ENCODE measurements at regions of chr15 and their contacts with region 1.

Region 1: DNA sequence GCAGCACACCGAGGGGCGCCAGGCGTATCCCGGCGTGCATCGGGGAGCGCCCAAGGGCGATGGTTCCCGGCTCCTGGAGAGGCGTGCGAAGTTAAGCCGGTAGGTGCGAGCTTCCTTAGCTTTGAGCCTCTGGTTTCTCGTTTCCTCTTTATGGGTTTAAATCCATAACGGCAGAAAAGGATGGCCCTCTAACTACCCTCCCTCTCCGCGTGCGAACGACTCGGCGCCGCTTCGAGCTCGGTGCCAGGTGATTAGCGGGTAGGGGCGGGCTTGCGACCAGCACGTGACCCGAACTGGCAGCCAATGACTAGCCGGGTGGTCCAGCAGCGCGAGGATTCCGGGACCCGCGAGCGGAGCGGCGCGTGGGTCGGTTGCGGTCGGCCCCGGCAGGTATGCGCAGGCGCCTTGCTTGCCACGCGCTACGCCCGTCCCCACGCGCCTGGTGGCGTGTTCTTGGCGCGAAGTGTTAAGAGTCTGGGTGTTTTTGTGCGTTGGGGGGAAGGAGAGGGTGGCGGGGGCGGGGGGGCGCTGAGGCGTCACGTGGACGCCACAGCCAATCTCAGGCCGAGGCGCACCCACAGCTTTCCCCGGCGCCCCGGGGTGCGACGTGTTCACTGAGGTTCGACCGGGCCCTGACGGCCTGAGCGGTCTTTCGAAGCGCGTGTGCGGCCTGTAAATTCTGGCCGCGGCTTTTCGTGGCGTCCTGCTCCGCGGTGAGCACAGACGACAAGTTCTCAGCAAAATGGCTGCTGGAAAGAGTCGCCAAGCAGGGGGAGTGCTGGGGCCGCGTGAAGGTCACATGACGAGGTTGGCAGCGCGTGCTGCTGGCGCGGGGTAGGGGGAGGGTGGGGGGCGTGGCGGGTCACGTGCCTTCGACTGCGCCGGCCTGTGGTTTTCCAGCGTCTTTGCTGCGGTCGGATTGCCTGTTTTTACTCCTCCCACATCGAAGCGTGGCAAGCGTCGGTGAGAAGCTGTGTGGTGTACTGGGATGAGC is 38.7 kb upstream of the MGA start:
- DNase-seq: peak; percentile 78
- ATAC-seq: peak; percentile 95
- H3K4me3 ChIP-seq: peak overlapping the region; percentile 36 to 63 (median 59); a peak in 5 of 6 replicates
- H3K27ac ChIP-seq: peak overlapping the region; percentile 83
- H3K4me1 ChIP-seq: peaks cover 26% of the 10 kb centered on the region
- H3K27me3 ChIP-seq: no peaks in the 10 kb centered on the region
- CTCF ChIP-seq: no peak
- EP300 ChIP-seq: peak in 1 of 2 experiments; percentile 38; a peak in 1 of 4 replicates
- POLR2A ChIP-seq: peak; percentile 60 to 81
- RAD21 ChIP-seq: peak; percentile 10; the same call in 1 of the 2 replicates

Region 2: GRCh38 chr15:41304149-41304770 is 317.2 kb before region 1 on chr15:
- CTCF ChIA-PET with region 1: no interaction called
- POLR2A ChIA-PET with region 1: no interaction called
- in situ Hi-C with region 1: no loop called
- intact Hi-C with region 1: no loop called
- DNase-seq: no peak
- ATAC-seq: no peak
- H3K4me3 ChIP-seq: no peak overlapping the region
- H3K27ac ChIP-seq: no peak overlapping the region
- H3K4me1 ChIP-seq: no peaks in the 10 kb centered on the region
- H3K27me3 ChIP-seq: no peaks in the 10 kb centered on the region
- CTCF ChIP-seq: no peak
- EP300 ChIP-seq: no peak
- POLR2A ChIP-seq: no peak
- RAD21 ChIP-seq: no peak

Region 3: DNA sequence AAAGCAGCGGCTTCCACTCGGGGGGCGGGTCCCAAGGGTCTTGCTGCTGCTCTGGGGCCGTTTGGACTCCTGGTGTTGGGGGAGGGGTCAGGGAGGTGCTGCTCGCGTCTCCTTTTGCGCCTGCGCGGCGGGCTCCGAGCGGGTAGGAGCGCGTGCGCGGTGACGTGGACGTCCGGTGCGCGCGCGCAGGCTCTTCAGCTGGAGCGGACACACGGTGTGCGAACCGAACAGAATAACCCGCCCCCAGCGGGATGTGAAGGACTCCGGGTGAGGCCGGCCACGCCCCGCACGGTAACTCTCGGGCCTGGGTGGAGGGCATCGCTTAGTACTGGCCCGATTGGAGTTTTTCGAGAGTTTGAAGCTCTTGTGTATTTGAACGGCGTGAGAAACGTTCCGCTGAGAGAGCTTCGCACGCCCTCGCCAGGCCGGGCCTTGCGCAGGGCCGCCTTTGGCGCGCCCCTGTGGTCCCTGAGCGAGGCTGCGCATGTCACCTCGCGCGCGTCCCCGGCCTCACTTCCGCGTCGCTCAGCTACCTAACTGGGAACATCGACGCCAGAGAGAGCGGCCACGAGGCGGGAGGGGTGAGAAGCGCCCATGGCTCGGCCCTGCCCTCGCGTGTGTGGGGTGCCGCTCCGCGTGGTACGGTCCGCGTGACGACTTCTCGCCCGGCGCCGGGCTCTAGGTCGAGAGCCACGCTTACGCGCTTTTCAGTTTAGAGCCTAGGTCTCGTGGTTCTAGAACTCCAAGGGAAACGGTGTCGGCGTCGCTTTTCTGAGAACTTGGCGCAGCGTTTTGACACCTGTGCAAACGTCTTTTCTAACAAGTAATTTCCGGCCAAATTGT is 39.0 kb after region 1 on chr15 and contains the start of gene MGA:
- CTCF ChIA-PET with region 1: no interaction called
- POLR2A ChIA-PET with region 1: interaction called, 13 read pairs
- in situ Hi-C with region 1: no loop called
- intact Hi-C with region 1: no loop called
- DNase-seq: peak; percentile 74
- ATAC-seq: peak; percentile 83
- H3K4me3 ChIP-seq: peak within 1 kb of the TSS; percentile 54 to 76 (median 61)
- H3K27ac ChIP-seq: peak within 1 kb of the TSS; percentile 80
- H3K4me1 ChIP-seq: peaks cover 50% of the 10 kb centered on the region
- H3K27me3 ChIP-seq: no peaks in the 10 kb centered on the region; a peak in 1 of 5 replicates
- CTCF ChIP-seq: peak; percentile 57
- EP300 ChIP-seq: no peak
- POLR2A ChIP-seq: peak; percentile 56 to 61
- RAD21 ChIP-seq: peak; percentile 32; the same call in 1 of the 2 replicates
- total RNA-seq, gene MGA: 59.0 and 71.8 TPM in 2 replicates

Measured in HepG2 (cell line).